OCI-LY7 (cell line): ENCODE measurements at regions of chr1 and their contacts with region 1.

Region 1: GRCh38 chr1:39653546-39654031 is 14.1 kb upstream of the HEYL start:
- DNase-seq: peak; percentile 73
- H3K4me3 ChIP-seq: no peak overlapping the region
- H3K27ac ChIP-seq: no peak overlapping the region
- H3K4me1 ChIP-seq: peaks cover 5% of the 10 kb centered on the region
- CTCF ChIP-seq: peak; percentile 93

Region 2: GRCh38 chr1:39720094-39720999 is 66.8 kb after region 1 on chr1:
- CTCF ChIA-PET with region 1: no interaction called
- POLR2A ChIA-PET with region 1: no interaction called
- intact Hi-C with region 1: loop called (anchors 5 kb)
- DNase-seq: peak; percentile 76
- H3K4me3 ChIP-seq: no peak overlapping the region
- H3K27ac ChIP-seq: no peak overlapping the region
- H3K4me1 ChIP-seq: no peaks in the 10 kb centered on the region
- CTCF ChIP-seq: peak; percentile 91

Region 3: GRCh38 chr1:40507973-40508372 is 854.4 kb after region 1 on chr1:
- CTCF ChIA-PET with region 1: no interaction called
- POLR2A ChIA-PET with region 1: no interaction called
- intact Hi-C with region 1: no loop called
- DNase-seq: no peak
- H3K4me3 ChIP-seq: peak overlapping the region; percentile 71
- H3K27ac ChIP-seq: peak overlapping the region; percentile 29
- H3K4me1 ChIP-seq: peaks cover 18% of the 10 kb centered on the region
- CTCF ChIP-seq: no peak